Activated CD4-positive, alpha-beta memory T cell treated with anti-CD3 and anti-CD28 coated beads, Interleukin-2, amount 10 ng/mL, durations not matched to agents 7 days and 5 days (primary cell): ENCODE measurements at regions of chr7 and their contacts with region 1.

Region 1: DNA sequence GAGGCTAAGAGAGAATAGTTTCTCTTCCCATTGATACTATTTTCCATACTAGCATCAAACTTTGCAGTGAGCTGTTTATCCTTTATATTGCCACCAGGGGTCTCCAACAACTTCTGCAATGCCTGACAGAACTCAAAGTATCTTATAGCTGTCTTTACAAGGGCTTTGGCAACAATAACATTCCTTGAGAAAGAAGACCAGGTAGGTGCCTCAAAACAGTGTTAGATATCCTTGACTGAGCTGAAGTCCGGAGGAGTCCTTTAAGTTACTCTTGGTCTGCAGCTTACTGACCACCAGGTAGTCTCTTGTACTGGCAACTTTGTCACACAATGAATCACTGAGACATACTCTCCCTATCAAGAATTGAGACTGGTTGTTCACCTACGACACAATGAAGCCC is 30.0 kb upstream of the TES start:
- DNase-seq: no peak
- H3K4me3 Mint-ChIP-seq: no peak overlapping the region
- H3K27ac Mint-ChIP-seq: no peak overlapping the region
- H3K4me1 Mint-ChIP-seq: no peaks in the 10 kb centered on the region
- H3K27me3 Mint-ChIP-seq: peaks cover 3% of the 10 kb centered on the region

Region 2: GRCh38 chr7:116120839-116121238 is 59.5 kb before region 1 on chr7:
- CTCF ChIA-PET with region 1: no interaction called
- POLR2A ChIA-PET with region 1: no interaction called
- DNase-seq: no peak
- H3K4me3 Mint-ChIP-seq: no peak overlapping the region
- H3K27ac Mint-ChIP-seq: no peak overlapping the region
- H3K4me1 Mint-ChIP-seq: no peaks in the 10 kb centered on the region
- H3K27me3 Mint-ChIP-seq: peaks cover 35% of the 10 kb centered on the region

Region 3: DNA sequence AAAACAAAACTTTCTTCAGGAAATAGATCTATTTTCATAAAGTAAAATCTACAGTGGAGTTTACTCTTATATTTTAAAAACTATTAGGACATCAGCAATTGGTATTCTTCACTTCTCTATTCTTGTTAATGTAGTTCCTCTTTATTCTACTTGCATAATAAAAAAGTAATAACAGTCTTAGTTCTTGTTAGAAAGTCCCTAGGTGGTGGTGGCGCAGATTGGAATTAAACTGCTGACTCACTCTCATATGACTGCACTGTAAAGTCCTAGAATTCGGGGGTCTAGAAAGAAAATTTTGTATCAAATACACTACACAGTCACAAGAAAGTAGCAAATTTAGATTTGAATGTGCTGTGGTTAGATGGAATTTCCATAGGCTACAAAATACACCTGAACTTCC is 14.6 kb before region 1 on chr7:
- CTCF ChIA-PET with region 1: interaction called, 18 read pairs
- POLR2A ChIA-PET with region 1: no interaction called
- DNase-seq: no peak
- H3K4me3 Mint-ChIP-seq: no peak overlapping the region
- H3K27ac Mint-ChIP-seq: no peak overlapping the region
- H3K4me1 Mint-ChIP-seq: peaks cover 19% of the 10 kb centered on the region
- H3K27me3 Mint-ChIP-seq: peaks cover 17% of the 10 kb centered on the region

Region 4: GRCh38 chr7:116211006-116211912 is 31.0 kb after region 1 on chr7:
- CTCF ChIA-PET with region 1: interaction called, 27 read pairs
- POLR2A ChIA-PET with region 1: interaction called, 14 read pairs
- DNase-seq: peak; percentile 82
- H3K4me3 Mint-ChIP-seq: peak overlapping the region; percentile 91
- H3K27ac Mint-ChIP-seq: peak overlapping the region; percentile 97
- H3K4me1 Mint-ChIP-seq: peaks cover 52% of the 10 kb centered on the region
- H3K27me3 Mint-ChIP-seq: no peaks in the 10 kb centered on the region

Region 5: DNA sequence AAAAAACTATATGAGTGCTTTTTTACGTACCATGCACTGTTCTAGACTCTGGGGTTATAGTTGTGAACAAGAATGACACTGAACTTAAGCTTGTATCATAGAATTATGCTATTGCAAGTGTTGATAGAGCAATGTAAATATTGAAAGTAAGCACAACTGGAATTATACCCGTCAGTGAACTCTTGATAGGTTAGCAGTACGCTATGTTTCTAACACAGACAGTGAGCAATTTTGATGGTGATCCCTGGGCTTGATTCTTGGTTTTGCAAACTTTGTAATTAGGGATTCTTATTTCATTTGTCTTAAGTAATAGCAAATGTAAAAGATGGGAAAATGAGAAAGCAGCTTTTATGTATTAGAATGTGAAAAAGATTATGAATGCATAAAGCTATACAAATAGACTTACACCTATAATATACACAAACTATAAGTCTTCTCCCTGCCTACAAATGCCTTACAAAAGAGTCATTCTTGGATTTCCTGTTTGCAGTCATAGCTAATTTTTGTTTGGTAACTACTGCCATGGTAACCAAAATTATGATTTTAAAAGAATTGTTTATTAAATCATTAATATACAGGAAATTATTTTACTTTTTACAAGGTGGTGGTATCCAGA is 36.8 kb after region 1 on chr7:
- CTCF ChIA-PET with region 1: interaction called, 27 read pairs
- POLR2A ChIA-PET with region 1: no interaction called
- DNase-seq: no peak
- H3K4me3 Mint-ChIP-seq: no peak overlapping the region
- H3K27ac Mint-ChIP-seq: no peak overlapping the region
- H3K4me1 Mint-ChIP-seq: peaks cover 82% of the 10 kb centered on the region
- H3K27me3 Mint-ChIP-seq: no peaks in the 10 kb centered on the region

Region 6: DNA sequence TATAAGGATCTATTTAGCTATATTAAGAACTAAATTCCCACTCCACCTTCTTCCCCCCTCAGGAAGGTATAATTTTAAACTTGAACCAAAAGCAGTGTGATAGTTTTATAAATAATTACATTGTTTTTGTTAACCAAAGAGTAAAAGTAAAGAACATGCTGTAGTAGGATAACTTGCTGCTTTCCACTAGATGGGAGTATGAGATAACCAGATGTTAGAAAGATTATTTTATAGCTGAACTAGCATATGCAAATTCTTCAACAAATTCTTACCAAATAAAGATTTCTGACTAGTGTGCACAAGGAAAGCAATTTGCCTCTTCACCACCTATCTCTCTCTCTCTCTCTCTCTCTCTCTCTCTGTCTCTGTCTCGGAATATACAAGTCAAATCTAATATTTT is 61.9 kb after region 1 on chr7:
- CTCF ChIA-PET with region 1: interaction called, 198 read pairs
- POLR2A ChIA-PET with region 1: no interaction called
- DNase-seq: no peak
- H3K4me3 Mint-ChIP-seq: no peak overlapping the region
- H3K27ac Mint-ChIP-seq: no peak overlapping the region
- H3K4me1 Mint-ChIP-seq: peaks cover 26% of the 10 kb centered on the region
- H3K27me3 Mint-ChIP-seq: no peaks in the 10 kb centered on the region

Region 7: DNA sequence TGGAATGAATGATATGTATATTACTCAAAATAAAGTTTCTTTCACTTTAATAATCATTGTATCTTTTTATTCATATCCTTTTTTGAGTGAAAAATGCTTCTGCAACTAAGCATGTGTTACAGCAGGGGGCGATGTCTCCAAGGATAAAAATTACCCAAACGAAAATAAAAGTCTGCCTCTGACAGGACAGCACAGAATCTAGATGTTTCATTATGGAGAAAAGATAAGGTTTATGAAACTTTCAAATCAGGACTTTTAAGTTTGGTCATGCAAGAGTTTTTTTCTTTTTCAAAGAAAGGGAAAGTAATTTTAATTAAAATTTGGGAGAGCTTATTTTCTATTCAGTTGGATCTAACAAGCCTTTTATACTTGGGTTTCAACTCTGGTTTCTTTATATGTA is 78.4 kb after region 1 on chr7:
- CTCF ChIA-PET with region 1: interaction called, 16 read pairs
- POLR2A ChIA-PET with region 1: interaction called, 3 read pairs
- DNase-seq: no peak
- H3K4me3 Mint-ChIP-seq: no peak overlapping the region
- H3K27ac Mint-ChIP-seq: no peak overlapping the region
- H3K4me1 Mint-ChIP-seq: peaks cover 11% of the 10 kb centered on the region
- H3K27me3 Mint-ChIP-seq: peaks cover 4% of the 10 kb centered on the region

Region 8: DNA sequence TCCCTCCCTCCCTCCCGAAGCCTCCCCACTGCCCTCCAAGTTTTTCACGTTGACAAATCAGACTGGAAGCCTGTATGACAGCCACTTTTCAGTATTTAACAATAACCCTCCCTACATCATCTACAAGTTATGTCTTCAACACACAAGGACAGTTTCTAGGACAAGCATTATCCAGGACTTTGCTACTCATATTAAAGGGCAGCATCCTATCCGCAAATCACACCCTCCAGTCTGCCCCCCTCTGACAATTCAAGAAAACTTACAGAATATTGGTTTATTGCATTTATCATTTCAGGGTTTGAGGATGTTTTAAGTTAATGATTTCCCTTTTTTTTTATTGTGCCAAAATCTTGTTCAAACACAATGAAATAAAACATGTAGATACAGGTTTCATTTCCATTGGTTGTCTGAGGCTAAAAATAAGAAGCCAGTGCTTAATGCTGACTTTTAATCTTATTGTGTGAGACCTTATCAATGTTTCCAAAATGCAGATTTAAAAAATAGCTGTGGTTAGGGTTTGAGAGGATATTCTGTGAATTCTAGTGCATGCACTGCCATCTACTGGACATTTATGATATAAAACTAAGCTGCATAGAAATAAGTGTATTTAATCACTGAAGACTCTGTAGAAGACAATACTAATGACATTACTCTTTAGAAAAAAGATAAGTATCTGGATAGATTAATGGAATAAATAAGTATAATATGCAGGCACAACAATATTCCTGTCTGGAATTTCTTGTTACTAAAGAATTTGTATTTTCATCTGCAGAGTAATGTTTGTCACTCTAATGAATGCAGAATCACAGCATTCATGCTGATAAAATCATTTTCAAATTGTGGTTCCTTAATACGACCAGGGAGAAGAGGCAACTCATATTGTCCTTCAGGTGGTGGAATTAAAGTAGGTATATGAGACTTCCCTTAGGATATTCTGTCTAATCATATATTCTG is 408.6 kb after region 1 on chr7:
- CTCF ChIA-PET with region 1: interaction called, 13 read pairs
- POLR2A ChIA-PET with region 1: interaction called, 3 read pairs
- DNase-seq: no peak
- H3K4me3 Mint-ChIP-seq: no peak overlapping the region
- H3K27ac Mint-ChIP-seq: no peak overlapping the region
- H3K4me1 Mint-ChIP-seq: peaks cover 25% of the 10 kb centered on the region
- H3K27me3 Mint-ChIP-seq: peaks cover 23% of the 10 kb centered on the region